Activated naive CD4-positive, alpha-beta T cell treated with anti-CD3 and anti-CD28 coated beads, Interleukin-2, amount 10 ng/mL, durations not matched to agents 7 days and 5 days (primary cell): ENCODE measurements at regions of chr17 and their contacts with region 1.

Region 1: GRCh38 chr17:35747540-35748017 is 5.5 kb downstream of the GAS2L2 start:
- DNase-seq: peak; percentile 86
- H3K4me3 Mint-ChIP-seq: no peak overlapping the region
- H3K27ac Mint-ChIP-seq: no peak overlapping the region
- H3K4me1 Mint-ChIP-seq: peaks cover 13% of the 10 kb centered on the region
- H3K27me3 Mint-ChIP-seq: peaks cover 83% of the 10 kb centered on the region

Region 2: DNA sequence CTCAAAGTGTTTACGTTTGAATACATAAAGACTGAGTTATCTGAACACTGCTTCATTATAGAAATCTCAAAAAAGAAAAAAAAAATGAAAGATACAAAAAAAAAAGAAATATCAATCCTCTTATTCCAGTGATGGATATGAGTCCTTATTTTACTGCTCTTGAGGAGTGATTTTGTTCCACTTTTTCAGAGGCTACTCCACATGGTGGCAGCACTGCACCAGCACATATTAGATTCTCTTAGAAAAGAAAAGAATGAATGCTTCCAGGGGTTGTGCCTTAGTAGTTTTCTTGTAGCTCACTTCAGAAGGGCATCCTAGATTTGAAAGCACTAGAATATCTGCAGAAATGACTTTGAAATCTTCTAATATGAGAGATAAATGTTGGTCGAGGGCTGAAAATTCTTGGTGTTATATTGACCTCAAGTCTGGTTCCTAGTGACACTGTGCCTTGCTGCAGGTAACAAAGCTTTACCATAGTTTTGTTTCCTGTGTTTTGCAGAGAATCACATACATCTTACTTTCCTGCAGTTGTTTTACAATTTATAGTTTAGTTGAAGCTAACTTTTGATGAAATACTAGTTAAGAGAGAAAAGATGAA is 134.6 kb before region 1 on chr17:
- CTCF ChIA-PET with region 1: interaction called, 92 read pairs
- DNase-seq: peak; percentile 68
- H3K4me3 Mint-ChIP-seq: no peak overlapping the region
- H3K27ac Mint-ChIP-seq: no peak overlapping the region
- H3K4me1 Mint-ChIP-seq: no peaks in the 10 kb centered on the region
- H3K27me3 Mint-ChIP-seq: no peaks in the 10 kb centered on the region

Region 3: DNA sequence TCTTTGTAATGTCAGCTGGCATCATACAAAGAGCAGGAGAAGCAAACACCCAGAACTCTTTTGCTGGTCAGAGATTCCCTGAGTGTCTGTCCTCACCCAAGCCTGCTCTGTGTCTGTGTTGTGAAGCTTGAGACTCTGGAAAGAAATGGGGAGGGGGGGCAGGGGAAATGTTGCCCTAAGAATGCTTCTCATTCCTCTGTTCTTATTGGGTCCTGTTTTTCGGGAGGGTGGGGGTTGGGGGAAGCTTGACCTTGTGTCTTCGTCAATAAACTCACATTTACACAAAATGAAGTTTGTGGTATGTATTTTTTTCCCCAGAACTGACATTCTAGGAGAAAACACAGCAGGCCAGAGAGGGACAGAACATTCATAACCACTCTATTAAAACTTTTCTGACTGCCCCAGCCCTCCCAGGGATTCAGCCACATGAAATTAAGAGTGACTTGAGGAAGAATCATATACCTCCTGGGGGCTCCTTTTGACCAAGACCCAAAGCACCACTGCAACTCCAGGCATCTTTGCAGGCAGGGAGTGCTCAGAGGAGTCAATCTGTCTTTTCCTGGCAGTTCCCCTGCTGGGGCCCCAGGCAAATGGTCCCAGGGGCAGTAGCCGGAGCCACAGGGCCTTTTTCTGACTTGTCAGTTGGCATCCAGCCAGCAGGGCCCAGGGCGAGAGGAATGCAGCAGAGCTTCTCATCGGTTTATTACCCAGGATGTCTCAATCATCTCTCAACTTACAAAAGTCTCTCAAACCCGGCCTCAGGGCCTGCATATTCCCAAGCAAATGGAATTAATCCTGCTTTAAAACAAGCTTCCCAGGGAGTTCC is 21.2 kb before region 1 on chr17:
- CTCF ChIA-PET with region 1: interaction called, 11 read pairs
- DNase-seq: no peak
- H3K4me3 Mint-ChIP-seq: no peak overlapping the region
- H3K27ac Mint-ChIP-seq: no peak overlapping the region
- H3K4me1 Mint-ChIP-seq: peaks cover 11% of the 10 kb centered on the region
- H3K27me3 Mint-ChIP-seq: peaks cover 12% of the 10 kb centered on the region